B cell (primary cell): ENCODE measurements at regions of chr2 and their contacts with region 1.

Region 1: DNA sequence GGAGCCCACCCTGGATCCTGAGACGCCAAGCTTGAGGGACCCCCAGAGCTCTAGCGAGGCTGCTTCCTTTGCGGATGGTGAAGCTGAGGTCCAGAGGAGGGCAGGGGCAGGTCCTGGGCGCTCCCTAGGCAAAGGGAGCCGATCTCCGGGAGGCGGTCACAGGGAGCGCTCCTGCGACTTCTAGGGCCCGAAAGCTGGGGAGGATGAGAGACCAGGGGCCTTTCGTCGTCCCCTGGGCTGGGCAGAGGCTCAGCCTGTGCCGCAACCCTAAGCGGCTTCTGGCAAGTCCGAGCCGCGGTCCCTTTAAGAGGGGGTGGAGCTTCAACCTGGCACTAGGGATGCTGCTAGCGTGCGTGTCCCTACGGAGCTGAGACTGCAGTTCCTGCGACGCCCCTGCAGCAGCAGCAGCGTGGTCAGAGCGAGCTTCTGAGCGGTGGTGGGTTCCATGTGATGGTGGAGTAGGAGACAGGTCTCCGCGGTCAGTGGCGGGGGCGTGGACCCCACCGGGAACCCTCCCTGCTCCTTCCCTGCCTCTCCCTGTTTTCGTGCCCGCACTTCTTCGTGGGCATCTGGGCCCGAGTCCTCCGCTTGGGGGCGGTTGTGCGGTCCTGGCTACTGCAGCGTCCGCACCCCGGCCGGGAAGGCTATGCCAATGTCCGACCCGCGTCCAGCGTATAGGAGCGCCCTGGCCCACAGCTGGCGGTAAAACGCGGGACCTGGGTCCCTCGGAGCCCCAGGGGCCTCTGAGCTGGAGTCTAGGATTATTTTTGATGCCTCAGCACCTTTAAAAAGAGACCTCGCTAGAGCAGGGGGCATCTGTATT is 154.6 kb downstream of the CCDC74A start:
- DNase-seq: peak; percentile 79
- ATAC-seq: peak; percentile 98
- H3K4me3 ChIP-seq: peak overlapping the region in 4 of 5 experiments; percentile 54 to 80 (median 72)
- H3K4me3 Mint-ChIP-seq: peak overlapping the region; percentile 94
- H3K27ac ChIP-seq: peak overlapping the region in 1 of 2 donors; percentile 66
- H3K27ac Mint-ChIP-seq: peak overlapping the region; percentile 89
- H3K4me1 ChIP-seq: peaks cover 4 to 16% of the 10 kb centered on the region in 2 donors
- H3K4me1 Mint-ChIP-seq: peaks cover 26% of the 10 kb centered on the region
- H3K27me3 ChIP-seq: peaks cover 0 to 20% (median 0%) of the 10 kb centered on the region in 4 experiments
- H3K27me3 Mint-ChIP-seq: no peaks in the 10 kb centered on the region
- CTCF ChIP-seq: no peak

Region 2: DNA sequence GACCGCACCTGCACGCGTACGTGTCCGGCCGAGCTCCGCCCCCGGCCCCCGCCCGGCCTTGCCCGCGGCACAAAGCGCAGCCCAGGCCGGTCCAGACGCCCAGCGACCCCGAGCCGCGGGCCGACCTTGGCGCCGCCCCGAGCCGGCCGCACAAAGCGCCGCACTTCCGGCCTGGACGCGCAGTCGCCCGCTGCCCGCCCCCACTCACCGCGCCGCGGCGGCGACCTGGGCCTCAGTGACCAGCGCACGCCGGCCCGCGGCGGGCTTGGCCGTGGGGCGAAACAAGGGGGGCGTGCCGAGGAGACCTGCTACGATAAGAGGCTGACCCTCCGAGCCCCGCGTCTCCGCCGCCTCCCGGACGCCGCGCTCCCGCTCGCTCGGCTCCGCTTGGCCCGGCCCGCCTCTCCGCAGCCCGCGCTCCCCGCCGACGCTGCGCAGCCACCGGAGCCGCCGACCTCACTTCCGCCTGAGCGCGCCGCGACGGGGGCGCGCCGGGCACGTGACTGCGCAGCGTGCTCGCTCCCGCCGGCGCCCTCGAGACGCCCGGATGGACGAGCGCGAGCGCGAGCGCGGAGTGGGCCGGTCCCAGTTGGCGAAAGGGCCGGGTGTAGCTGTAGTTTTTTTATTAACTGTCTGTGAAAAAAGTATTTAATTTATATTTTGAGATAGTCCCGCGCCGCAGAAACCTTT is 589.2 kb before region 1 on chr2 and contains the start of gene FAM168B:
- CTCF ChIA-PET with region 1: no interaction called
- POLR2A ChIA-PET with region 1: no interaction called
- intact Hi-C with region 1: loop called (anchors 5 kb)
- DNase-seq: peak; percentile 93
- ATAC-seq: peak; percentile 76
- H3K4me3 ChIP-seq: peak within 1 kb of the TSS; percentile 67 to 99 (median 80)
- H3K4me3 Mint-ChIP-seq: peak within 1 kb of the TSS; percentile 94
- H3K27ac ChIP-seq: peak within 1 kb of the TSS; percentile 71 to 92
- H3K27ac Mint-ChIP-seq: peak within 1 kb of the TSS; percentile 93
- H3K4me1 ChIP-seq: peaks cover 7 to 16% of the 10 kb centered on the region in 2 donors
- H3K4me1 Mint-ChIP-seq: peaks cover 18% of the 10 kb centered on the region
- H3K27me3 ChIP-seq: no peaks in the 10 kb centered on the region
- H3K27me3 Mint-ChIP-seq: no peaks in the 10 kb centered on the region
- CTCF ChIP-seq: no peak
- total RNA-seq, gene FAM168B: 69.1 and 70.5 TPM in 2 replicates

Region 3: DNA sequence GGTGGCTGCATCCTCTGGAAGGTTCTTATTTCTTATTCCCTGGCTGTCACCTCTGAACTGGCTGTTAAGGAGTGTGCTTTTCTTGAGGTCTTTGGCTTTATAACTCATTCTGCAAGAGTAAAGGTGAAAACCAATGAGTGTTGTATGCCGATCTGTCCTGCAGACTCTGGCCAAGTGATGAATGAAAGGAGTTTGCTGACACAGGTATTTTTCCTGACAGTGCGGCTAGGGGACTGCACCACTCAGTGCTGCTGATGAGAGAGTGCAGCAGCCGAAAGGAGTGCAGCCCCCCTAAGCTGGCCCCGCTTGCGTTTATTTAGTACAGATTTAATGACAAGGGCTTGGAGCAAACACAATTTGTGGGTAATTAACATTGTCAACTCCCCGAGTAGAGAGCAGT is 360.1 kb before region 1 on chr2:
- CTCF ChIA-PET with region 1: no interaction called
- POLR2A ChIA-PET with region 1: no interaction called
- intact Hi-C with region 1: no loop called
- DNase-seq: no peak
- ATAC-seq: no peak
- H3K4me3 ChIP-seq: no peak overlapping the region
- H3K4me3 Mint-ChIP-seq: no peak overlapping the region
- H3K27ac ChIP-seq: no peak overlapping the region
- H3K27ac Mint-ChIP-seq: no peak overlapping the region
- H3K4me1 ChIP-seq: no peaks in the 10 kb centered on the region
- H3K4me1 Mint-ChIP-seq: no peaks in the 10 kb centered on the region
- H3K27me3 ChIP-seq: no peaks in the 10 kb centered on the region
- H3K27me3 Mint-ChIP-seq: peaks cover 11% of the 10 kb centered on the region
- CTCF ChIP-seq: no peak

Region 4: DNA sequence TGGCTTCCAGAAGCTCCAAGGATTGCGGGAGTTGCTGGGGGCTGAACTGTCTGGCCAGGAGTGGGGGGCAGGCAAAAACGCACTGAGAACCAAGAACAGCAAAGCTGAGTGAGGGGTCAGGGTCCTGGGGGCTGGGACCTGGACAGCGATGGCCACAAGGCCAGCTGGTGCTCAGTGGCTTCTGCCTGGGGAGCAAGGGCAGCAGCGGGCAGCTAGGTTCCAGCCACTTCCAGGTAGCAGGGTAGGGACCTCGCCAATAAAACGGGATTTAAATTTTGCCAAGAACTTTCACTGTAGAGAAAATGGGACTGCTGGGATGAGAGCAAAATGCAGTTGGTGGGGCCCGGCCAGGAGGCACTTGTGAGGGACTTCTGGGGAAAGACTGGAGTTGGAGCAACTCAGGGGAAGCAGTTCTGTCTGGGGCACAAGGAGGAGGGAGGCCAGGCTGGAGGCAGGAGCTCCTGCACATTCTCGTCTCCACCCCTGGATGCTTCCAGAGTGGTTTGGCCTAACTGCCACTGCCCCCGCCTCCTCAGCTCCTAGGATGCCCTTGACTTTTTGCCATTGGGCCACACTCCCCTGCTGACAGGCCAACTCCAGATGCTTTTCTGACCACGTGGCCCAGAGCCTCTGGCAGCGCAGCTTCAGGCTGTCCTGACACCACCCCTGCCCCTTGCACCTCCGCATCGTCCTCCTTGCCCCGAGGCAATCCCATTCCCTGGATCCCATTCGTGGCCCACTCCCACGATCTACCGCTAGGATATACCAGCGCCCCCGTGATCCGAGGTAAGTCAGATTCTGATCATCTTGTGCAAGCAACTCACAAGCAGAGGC is 160.2 kb before region 1 on chr2:
- CTCF ChIA-PET with region 1: no interaction called
- POLR2A ChIA-PET with region 1: no interaction called
- intact Hi-C with region 1: loop called (anchors 2 kb)
- DNase-seq: no peak
- ATAC-seq: no peak
- H3K4me3 ChIP-seq: no peak overlapping the region
- H3K4me3 Mint-ChIP-seq: no peak overlapping the region
- H3K27ac ChIP-seq: no peak overlapping the region
- H3K27ac Mint-ChIP-seq: no peak overlapping the region
- H3K4me1 ChIP-seq: peaks cover 0 to 1% of the 10 kb centered on the region in 2 donors
- H3K4me1 Mint-ChIP-seq: no peaks in the 10 kb centered on the region
- H3K27me3 ChIP-seq: no peaks in the 10 kb centered on the region
- H3K27me3 Mint-ChIP-seq: no peaks in the 10 kb centered on the region
- CTCF ChIP-seq: no peak